HepG2 (cell line): ENCODE measurements at regions of chr5 and their contacts with region 1.

Region 1: DNA sequence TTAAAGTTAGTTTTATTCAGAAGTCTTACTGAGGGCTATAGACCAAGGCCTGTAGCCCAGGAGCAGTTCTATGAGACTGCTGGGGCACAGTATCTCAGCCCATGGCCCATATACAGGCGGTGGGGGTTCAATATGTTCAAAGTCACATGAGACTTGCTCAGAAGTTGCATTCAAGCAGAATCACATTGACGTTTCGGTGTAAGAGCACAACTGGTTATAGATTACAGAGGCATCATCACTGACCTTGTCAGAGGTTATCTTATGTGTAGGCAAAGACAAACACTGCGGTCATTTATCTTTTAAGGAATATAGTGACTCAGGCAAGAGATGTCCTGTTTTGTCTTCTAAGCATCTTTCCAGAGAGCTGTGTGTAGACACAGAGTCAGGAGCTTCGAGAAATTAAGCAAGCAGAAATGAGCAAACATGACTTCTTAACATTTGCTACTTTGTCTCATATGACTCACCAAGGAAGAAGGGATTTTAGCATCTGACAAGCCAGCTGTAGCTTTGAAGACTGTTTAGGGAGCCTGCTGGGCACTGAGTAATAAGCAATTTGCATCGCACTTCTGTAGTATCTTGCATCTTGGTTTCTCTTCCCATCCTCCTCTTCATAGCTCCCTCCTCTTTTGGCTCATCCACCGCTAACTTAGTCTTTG is 12.9 kb upstream of the F2RL1 start:
- DNase-seq: peak; percentile 87
- ATAC-seq: peak; percentile 56
- H3K4me3 ChIP-seq: no peak overlapping the region
- H3K27ac ChIP-seq: no peak overlapping the region
- H3K4me1 ChIP-seq: peaks cover 29% of the 10 kb centered on the region
- H3K27me3 ChIP-seq: peaks cover 2 to 4% of the 10 kb centered on the region in 2 experiments; a peak in 1 of 5 replicates
- CTCF ChIP-seq: no peak
- EP300 ChIP-seq: peak in 1 of 2 experiments; percentile 84; a peak in 2 of 4 replicates
- POLR2A ChIP-seq: no peak
- RAD21 ChIP-seq: no peak

Region 2: GRCh38 chr5:76785487-76785886 is 20.5 kb before region 1 on chr5:
- CTCF ChIA-PET with region 1: no interaction called
- POLR2A ChIA-PET with region 1: interaction called, 48 read pairs
- in situ Hi-C with region 1: no loop called
- intact Hi-C with region 1: loop called (anchors 2 kb)
- DNase-seq: peak; percentile 79
- ATAC-seq: peak; percentile 72
- H3K4me3 ChIP-seq: no peak overlapping the region
- H3K27ac ChIP-seq: no peak overlapping the region
- H3K4me1 ChIP-seq: peaks cover 51% of the 10 kb centered on the region
- H3K27me3 ChIP-seq: no peaks in the 10 kb centered on the region
- CTCF ChIP-seq: no peak
- EP300 ChIP-seq: peak in 1 of 2 experiments; percentile 55; a peak in 1 of 4 replicates
- POLR2A ChIP-seq: no peak
- RAD21 ChIP-seq: no peak

Region 3: DNA sequence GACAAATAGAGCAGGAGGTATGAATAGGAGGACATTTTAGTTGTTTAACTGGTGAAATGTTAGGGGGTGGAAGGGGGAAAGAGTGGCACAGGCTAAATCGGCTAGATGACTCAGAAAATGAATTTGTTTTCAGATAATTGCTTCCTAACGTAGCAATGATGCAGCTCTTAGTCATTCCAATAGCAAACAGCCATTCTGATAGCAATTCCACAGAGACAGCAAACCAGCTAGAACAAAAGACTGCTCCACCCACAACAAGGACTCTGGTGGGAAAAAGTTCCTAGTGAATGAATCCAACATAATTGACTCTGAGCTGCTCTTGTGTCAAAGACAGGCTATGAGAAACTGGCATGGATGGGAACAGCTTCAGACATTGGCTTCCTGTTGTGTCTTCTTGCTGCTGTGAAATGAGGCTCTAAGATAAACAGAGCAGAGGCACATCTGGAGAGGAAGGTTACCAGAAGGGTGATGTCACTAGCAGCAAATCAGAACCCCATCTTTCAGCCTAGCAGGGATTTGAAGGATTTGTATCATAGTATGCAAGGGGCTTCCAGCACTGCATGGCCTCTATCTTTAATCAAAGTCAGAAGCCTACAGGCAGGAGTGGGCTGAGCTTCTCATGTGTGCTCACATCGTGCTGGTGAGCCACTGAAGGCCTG is 15.2 kb before region 1 on chr5:
- CTCF ChIA-PET with region 1: no interaction called
- POLR2A ChIA-PET with region 1: interaction called, 48 read pairs
- in situ Hi-C with region 1: no loop called
- intact Hi-C with region 1: loop called (anchors 2 kb)
- DNase-seq: peak; percentile 76
- ATAC-seq: peak; percentile 47
- H3K4me3 ChIP-seq: no peak overlapping the region
- H3K27ac ChIP-seq: no peak overlapping the region
- H3K4me1 ChIP-seq: peaks cover 48% of the 10 kb centered on the region
- H3K27me3 ChIP-seq: no peaks in the 10 kb centered on the region
- CTCF ChIP-seq: no peak
- EP300 ChIP-seq: peak in 1 of 2 experiments; percentile 54; a peak in 1 of 4 replicates
- POLR2A ChIP-seq: no peak
- RAD21 ChIP-seq: no peak

Region 4: DNA sequence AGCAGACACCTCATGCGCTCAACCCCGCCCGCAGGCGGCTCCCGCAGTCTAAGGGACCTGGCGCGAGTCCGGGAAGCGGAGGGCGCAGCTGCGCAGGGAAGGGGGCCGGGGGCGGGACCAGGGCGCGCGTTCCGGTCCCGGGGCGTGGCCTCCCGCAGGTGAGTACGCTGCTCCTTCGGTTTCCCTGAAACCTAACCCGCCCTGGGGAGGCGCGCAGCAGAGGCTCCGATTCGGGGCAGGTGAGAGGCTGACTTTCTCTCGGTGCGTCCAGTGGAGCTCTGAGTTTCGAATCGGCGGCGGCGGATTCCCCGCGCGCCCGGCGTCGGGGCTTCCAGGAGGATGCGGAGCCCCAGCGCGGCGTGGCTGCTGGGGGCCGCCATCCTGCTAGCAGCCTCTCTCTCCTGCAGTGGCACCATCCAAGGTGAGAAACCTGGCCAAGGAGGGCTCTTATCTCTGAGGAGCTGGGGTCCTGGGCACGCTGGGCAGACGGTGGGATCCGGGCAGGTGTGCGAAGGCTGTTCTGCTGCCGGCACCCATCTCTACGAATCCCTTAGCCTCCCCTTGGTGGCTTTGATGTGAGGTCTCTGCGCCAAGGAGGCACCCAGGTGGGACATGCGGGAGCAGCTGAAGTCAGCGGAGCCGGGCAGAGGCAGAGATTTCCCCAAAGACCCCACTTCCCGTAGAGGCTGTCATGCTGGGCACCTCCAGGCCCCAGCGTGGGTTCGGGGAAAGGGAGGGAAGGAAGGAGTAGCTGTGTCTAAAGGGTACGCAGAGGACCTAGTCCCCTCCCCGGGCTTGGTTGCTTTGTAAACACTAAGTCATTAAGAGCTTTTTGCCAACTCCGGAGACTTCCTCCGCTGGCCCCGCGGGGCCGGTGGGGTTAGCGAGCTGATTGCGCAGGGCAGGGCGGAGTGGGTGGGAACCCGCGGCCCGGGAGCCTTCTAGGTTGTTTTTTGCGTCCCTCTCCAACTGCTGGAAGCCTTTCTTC is 13.2 kb after region 1 on chr5 and contains the start of gene F2RL1:
- CTCF ChIA-PET with region 1: no interaction called
- POLR2A ChIA-PET with region 1: interaction called, 44 read pairs
- in situ Hi-C with region 1: no loop called
- intact Hi-C with region 1: no loop called
- DNase-seq: peak; percentile 81
- ATAC-seq: peak; percentile 95
- H3K4me3 ChIP-seq: peak within 1 kb of the TSS; percentile 77 to 84 (median 80)
- H3K27ac ChIP-seq: no peak within 1 kb of the TSS
- H3K4me1 ChIP-seq: peaks cover 37% of the 10 kb centered on the region
- H3K27me3 ChIP-seq: no peaks in the 10 kb centered on the region
- CTCF ChIP-seq: peak; percentile 48
- EP300 ChIP-seq: no peak
- POLR2A ChIP-seq: 0 out of 4 replicates have a peak, but pooled peaks of 1 of the 2 experiments have one; percentile 33
- RAD21 ChIP-seq: no peak
- total RNA-seq, gene F2RL1: 6.3 and 9.9 TPM in 2 replicates

Region 5: DNA sequence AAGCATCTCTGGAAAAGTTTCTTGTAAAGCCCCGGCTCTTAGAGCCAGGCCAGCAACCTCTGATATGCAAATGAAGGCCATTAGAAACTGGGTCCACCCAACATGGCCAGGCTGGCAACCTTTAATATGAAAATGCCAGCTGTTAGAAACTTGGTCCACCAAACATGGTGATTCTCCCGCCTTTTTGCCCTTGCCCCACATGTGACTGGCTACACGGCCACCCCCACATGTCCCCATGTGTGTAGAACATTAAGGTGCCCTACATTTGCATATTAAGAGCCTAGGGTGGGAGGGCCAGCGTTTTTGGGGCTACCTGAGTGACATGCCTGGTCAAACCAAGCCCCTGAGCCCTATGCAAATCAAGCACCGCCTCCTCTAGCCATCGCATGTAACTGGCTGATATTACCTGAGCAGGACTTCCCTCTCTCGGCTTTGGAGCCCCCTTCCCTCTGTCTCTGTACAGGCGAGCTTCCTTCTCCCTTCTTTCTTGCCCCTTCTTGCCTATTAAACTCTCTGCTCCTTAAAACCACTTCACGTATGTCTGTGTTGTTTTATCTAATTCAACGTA is 82.8 kb after region 1 on chr5:
- CTCF ChIA-PET with region 1: no interaction called
- POLR2A ChIA-PET with region 1: no interaction called
- in situ Hi-C with region 1: no loop called
- intact Hi-C with region 1: no loop called
- DNase-seq: no peak
- ATAC-seq: no peak
- H3K4me3 ChIP-seq: no peak overlapping the region
- H3K27ac ChIP-seq: no peak overlapping the region
- H3K4me1 ChIP-seq: no peaks in the 10 kb centered on the region
- H3K27me3 ChIP-seq: no peaks in the 10 kb centered on the region; a peak in 1 of 5 replicates
- CTCF ChIP-seq: no peak
- EP300 ChIP-seq: no peak
- POLR2A ChIP-seq: no peak
- RAD21 ChIP-seq: no peak